ENCODE measurements at regions of chr6 and their contacts with region 1.

Region 1: DNA sequence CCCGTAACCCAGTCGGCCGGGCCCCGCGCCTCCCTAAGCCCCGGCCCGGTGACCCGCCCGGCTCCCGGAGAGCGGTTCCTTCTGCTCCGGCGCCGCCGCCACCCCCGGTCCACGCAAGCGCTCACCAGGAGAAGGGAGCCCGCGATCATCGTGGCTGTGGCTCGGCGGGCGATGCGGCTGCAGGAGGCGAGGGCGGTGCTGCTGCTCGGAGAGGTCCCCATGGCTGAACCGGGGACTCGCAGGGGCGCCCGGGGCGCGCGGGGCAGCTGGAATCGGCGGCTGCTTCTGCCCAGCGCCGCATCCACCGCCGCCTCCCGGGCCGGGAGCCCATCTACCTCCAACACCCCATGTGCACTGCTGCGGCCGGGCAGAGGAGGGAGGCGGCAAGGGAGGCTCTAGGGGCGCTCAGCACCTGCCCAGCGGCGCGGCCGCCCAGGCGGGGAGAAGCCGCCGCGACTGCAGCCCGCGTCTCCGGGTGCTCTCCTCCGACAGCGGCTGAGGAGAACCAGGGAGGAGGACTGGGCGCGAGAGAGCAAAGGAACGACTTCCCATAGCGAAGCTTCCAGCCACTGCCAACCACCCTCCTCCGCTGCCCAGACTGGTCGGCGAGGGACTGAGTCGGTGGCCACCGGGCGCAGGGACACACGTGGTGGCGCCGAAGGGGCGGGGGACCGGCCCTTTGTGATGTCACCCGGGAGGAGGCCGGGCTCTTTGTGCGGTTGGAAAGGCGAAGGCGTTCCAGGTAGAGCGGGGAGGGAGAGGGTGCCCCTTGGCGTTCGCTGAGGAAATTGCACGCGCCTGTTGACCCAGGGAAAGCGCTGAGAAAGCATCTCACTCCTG is at the start of gene TNFRSF21:
- DNase-seq: peak; percentile 85 to 98 (median 94)

Region 2: DNA sequence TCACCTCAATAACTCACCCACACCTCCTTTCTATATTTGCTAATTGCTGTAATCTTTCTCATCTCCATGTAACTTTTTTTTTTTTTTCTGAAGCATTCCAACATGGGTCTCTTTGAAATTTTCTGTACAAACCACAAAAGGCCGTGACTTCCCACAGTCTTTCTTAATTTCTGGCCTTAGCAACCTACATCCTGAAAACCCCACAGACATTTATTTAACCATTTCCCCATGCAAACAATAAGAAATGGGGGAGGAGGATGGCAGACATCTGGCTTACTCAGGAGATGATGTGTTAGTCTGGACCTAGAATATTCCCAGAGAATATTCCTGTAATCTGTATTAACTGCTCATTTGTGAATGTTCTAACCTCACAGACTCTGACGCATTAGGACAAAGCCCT is 458.7 kb before region 1 on chr6:
- intact Hi-C with region 1: loop called (anchors 10 kb)
- DNase-seq: no peak

Region 3: GRCh38 chr6:47097092-47097945 is 212.2 kb before region 1 on chr6:
- intact Hi-C with region 1: loop called (anchors 5 kb)
- DNase-seq: peak; percentile 36 to 89 (median 73)